Panc1 (cell line): ENCODE measurements at regions of chr2 and their contacts with region 1.

Region 1: DNA sequence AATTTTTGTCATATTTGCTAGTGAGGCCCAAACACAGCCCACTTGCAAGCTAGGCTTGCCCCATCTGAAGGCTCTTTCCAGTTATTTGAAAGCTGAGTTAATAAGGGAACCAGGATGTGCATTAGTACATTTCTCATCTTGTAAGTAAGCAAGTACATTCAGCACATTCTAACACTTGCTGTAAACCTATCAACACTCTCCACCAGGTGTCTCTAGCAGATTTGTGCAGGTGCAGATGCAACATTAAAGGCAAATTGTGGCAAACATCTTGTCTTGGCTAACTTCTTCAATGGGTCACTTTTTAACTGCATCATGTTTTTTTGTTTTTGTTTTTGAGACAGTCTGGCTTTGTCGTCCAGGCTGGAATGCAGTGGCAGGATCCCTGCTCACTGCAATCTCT is 25.3 kb upstream of the MFSD6 start:
- DNase-seq: peak; percentile 28
- ATAC-seq: peak; percentile 84
- H3K4me3 ChIP-seq: no peak overlapping the region
- H3K27ac ChIP-seq: no peak overlapping the region
- H3K4me1 ChIP-seq: no peaks in the 10 kb centered on the region
- H3K27me3 ChIP-seq: no peaks in the 10 kb centered on the region
- CTCF ChIP-seq: peak; percentile 67

Region 2: GRCh38 chr2:189454009-189454408 is 928.8 kb before region 1 on chr2:
- CTCF ChIA-PET with region 1: no interaction called
- POLR2A ChIA-PET with region 1: no interaction called
- in situ Hi-C with region 1: no loop called
- intact Hi-C with region 1: no loop called
- DNase-seq: no peak
- ATAC-seq: no peak
- H3K4me3 ChIP-seq: no peak overlapping the region
- H3K27ac ChIP-seq: no peak overlapping the region
- H3K4me1 ChIP-seq: no peaks in the 10 kb centered on the region
- H3K27me3 ChIP-seq: no peaks in the 10 kb centered on the region
- CTCF ChIP-seq: no peak

Region 3: DNA sequence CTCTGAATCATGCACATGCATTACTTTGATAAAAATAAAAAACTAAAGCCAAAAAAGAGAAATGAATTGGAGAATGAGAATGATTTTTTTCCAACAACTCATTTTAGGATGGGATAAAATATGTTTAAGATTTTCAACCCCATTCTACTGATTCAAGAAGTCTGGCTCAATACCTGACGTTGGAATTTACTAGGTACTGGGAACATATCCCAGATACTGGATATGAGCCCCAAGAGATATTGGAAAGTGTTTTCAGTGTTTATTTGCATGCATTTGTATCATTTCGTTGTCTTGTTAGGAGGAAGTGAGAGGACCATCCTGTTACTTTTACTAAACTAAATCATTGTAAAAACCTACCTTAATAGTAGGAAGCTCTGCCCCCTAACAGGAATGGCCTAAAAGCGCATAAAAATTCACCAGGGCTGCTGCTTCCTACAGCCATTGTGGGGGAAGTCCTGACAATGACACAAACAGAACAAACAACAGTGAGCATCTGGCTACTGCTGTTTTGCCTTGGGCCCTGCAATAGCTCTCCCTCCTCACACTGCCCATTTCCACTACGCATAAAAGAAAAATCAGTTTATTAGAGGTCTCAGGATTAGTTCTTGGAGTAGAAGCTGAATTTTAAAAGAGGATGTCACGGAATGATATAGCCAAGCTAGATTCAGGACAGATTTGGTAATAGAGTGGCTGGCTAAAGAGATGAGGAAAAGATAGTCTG is 673.2 kb before region 1 on chr2:
- CTCF ChIA-PET with region 1: no interaction called
- POLR2A ChIA-PET with region 1: no interaction called
- in situ Hi-C with region 1: no loop called
- intact Hi-C with region 1: no loop called
- DNase-seq: no peak
- ATAC-seq: no peak
- H3K4me3 ChIP-seq: no peak overlapping the region
- H3K27ac ChIP-seq: no peak overlapping the region
- H3K4me1 ChIP-seq: no peaks in the 10 kb centered on the region
- H3K27me3 ChIP-seq: no peaks in the 10 kb centered on the region
- CTCF ChIP-seq: no peak

Region 4: DNA sequence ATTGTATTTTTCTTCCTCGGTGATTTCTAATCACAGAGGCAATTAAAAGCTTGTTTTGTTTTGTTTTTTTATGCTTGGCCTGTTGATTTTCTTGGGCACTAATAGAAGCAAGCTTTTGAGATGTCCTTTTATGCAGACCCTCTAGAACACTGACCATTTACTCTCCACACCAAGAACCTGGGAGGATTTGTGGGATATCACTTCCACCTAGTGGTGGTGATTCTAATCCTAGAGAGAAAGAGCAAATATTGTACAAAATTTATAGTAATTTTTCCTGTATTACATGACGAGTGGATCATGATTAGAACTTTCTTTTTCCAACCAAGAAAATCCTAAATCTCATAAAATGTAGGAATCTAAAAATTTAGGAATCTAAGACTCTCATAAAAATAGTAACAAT is 128.3 kb after region 1 on chr2:
- CTCF ChIA-PET with region 1: no interaction called
- POLR2A ChIA-PET with region 1: no interaction called
- in situ Hi-C with region 1: no loop called
- intact Hi-C with region 1: loop called (anchors 1 kb)
- DNase-seq: no peak
- ATAC-seq: no peak
- H3K4me3 ChIP-seq: no peak overlapping the region
- H3K27ac ChIP-seq: no peak overlapping the region
- H3K4me1 ChIP-seq: no peaks in the 10 kb centered on the region
- H3K27me3 ChIP-seq: no peaks in the 10 kb centered on the region
- CTCF ChIP-seq: peak; percentile 39; the same call in 1 of the 2 replicates

Region 5: DNA sequence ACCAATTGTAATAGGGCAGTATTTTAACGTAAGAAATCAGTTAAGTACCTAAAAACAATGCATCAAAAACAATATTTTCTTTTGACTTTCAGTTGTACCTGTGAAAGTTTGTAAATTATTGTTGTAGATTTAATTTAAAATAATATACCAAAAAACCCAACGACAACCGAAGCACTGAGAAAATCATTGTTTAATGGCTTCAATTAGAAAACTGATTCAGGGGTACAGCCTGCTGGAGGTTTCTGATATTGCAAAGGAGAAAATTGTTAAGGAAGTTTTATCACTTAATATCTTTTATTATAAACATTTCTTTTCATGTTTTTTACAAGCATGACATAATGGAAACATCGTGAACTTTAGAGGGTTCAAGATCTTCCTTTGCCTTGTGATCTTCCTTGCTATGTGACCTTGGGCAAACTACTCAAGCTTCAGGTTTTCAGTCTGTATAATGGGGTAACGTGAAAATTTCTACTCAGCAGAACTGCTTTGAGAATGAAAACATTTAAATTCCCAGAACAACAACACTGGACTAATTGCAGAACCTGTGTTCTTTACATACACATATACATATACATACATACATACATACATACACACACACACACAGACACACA is 421.4 kb after region 1 on chr2:
- CTCF ChIA-PET with region 1: no interaction called
- POLR2A ChIA-PET with region 1: no interaction called
- in situ Hi-C with region 1: no loop called
- intact Hi-C with region 1: loop called (anchors 10 kb)
- DNase-seq: no peak
- ATAC-seq: no peak
- H3K4me3 ChIP-seq: no peak overlapping the region
- H3K27ac ChIP-seq: no peak overlapping the region
- H3K4me1 ChIP-seq: no peaks in the 10 kb centered on the region
- H3K27me3 ChIP-seq: no peaks in the 10 kb centered on the region; the same call in 1 of the 2 replicates
- CTCF ChIP-seq: peak; percentile 64; the same call in 1 of the 2 replicates